PC-9 (cell line): ENCODE measurements at regions of chr14 and their contacts with region 1.

Region 1: DNA sequence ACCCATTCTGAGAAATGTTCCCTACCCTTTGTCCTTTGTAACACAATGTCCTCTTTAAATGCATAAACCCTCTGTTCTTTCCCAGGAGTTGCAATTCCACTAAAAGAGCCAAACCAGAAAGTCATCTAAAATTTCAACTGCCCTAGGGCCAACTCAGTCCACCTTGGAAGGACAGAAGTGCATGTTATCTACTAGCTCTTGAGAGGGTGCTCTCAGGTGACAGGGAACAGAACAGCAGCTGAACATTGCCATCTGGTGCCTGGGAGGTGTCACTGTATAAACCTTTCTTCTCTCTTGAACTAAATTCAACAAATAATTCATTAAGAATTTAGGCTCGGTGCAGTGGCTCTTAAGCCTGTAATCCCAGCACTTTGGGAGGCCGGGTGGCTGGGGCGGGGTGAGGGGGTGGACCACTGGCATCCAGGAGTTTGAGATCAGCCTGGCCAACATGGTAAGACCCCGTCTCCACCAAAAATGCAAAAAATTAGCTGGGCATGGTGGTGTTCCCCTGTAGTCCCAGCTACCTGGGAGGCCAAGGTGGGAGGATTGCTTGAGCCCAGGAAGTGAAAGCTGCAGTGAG is 10.3 kb upstream of the FERMT2 start:
- DNase-seq: peak; percentile 57 to 70
- H3K4me3 ChIP-seq: no peak overlapping the region
- H3K27ac ChIP-seq: no peak overlapping the region
- H3K4me1 ChIP-seq: no peaks in the 10 kb centered on the region
- H3K27me3 ChIP-seq: no peaks in the 10 kb centered on the region
- CTCF ChIP-seq: peak; percentile 81

Region 2: DNA sequence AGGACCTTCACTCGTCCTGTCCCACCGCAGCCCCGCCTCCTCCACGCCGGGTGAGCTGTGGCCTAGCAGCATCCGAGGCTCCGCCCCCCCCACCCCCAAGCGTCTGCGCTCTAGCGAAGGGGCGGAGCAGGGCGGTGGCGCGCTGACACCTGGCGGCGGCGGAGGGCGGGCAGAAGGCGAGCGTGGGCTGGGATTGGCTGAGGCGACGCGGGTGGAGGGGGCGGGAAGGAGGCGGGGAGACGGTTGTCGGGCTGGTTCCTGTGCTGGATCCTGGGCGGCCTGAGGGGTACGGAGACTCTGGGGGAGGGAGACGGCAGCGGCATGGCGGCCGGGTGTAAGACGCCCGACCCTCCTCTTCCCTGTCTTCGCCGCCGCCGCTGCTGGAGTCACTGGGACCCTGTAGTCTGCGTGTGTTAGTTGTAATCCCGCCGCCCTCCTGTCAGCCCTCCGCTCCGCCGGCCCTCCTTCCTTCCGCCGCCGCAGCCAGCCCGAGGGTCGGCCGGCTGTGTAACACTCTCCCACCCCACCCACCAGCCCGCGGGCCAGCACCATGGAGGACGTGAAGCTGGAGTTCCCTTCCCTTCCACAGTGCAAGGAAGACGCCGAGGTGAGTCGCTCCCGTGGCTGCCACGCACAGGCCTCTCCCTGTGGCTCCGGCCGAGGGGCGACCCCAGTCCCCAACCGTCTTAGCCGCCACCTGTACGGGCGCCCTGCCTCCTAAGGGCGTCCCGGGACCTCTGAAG is 231.1 kb before region 1 on chr14 and contains the start of gene STYX:
- CTCF ChIA-PET with region 1: no interaction called
- POLR2A ChIA-PET with region 1: no interaction called
- intact Hi-C with region 1: loop called (anchors 5 kb)
- DNase-seq: peak; percentile 94 to 99
- H3K4me3 ChIP-seq: peak within 1 kb of the TSS; percentile 94
- H3K27ac ChIP-seq: peak within 1 kb of the TSS; percentile 25
- H3K4me1 ChIP-seq: peaks cover 6% of the 10 kb centered on the region; the same call in 1 of the 2 replicates
- H3K27me3 ChIP-seq: no peaks in the 10 kb centered on the region
- CTCF ChIP-seq: peak; percentile 31; the same call in 1 of the 2 replicates
- total RNA-seq, gene STYX: 7.0 and 10.8 TPM in 2 replicates

Region 3: DNA sequence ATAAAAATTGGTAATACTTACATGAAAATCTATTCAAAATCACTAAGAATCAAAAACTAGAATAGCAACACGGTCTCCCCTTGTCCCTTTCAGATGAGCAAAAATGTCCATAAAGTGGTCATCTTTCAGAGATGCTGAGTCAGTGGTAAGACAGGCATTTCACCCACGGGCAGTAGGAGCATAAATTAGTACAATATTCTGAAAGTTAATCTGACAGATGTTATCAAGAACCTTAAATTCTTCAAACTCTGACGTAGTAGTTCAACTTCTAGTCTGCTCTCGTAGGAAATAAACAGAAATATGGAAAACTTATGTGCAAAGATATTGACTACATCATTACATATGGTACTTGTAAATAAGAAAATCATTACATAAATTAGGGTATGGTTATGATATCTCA is 136.6 kb before region 1 on chr14:
- CTCF ChIA-PET with region 1: interaction called, 8 read pairs
- POLR2A ChIA-PET with region 1: no interaction called
- intact Hi-C with region 1: loop called (anchors 1 kb)
- DNase-seq: no peak
- H3K4me3 ChIP-seq: no peak overlapping the region
- H3K27ac ChIP-seq: no peak overlapping the region
- H3K4me1 ChIP-seq: no peaks in the 10 kb centered on the region
- H3K27me3 ChIP-seq: no peaks in the 10 kb centered on the region
- CTCF ChIP-seq: no peak

Region 4: GRCh38 chr14:53306267-53306721 is 345.1 kb after region 1 on chr14:
- CTCF ChIA-PET with region 1: no interaction called
- POLR2A ChIA-PET with region 1: no interaction called
- intact Hi-C with region 1: loop called (anchors 1 kb)
- DNase-seq: peak in 1 of 2 experiments; percentile 31
- H3K4me3 ChIP-seq: no peak overlapping the region
- H3K27ac ChIP-seq: no peak overlapping the region
- H3K4me1 ChIP-seq: no peaks in the 10 kb centered on the region
- H3K27me3 ChIP-seq: no peaks in the 10 kb centered on the region
- CTCF ChIP-seq: peak; percentile 83